HCT116 (cell line): ENCODE measurements at regions of chr2 and their contacts with region 1.

Region 1: GRCh38 chr2:84925724-84926376 is 20.4 kb downstream of the TMSB10 start:
- DNase-seq: peak; percentile 98
- ATAC-seq: peak; percentile 86
- H3K4me3 ChIP-seq: peak overlapping the region; percentile 54 to 74
- H3K27ac ChIP-seq: peak overlapping the region; percentile 73
- H3K4me1 ChIP-seq: peaks cover 11 to 43% of the 10 kb centered on the region in 2 experiments
- H3K27me3 ChIP-seq: no peaks in the 10 kb centered on the region
- CTCF ChIP-seq: peak in 2 of 3 experiments; percentile 98 to 100; a peak in 4 of 6 replicates
- POLR2A ChIP-seq: peak; percentile 23
- RAD21 ChIP-seq: no peak

Region 2: DNA sequence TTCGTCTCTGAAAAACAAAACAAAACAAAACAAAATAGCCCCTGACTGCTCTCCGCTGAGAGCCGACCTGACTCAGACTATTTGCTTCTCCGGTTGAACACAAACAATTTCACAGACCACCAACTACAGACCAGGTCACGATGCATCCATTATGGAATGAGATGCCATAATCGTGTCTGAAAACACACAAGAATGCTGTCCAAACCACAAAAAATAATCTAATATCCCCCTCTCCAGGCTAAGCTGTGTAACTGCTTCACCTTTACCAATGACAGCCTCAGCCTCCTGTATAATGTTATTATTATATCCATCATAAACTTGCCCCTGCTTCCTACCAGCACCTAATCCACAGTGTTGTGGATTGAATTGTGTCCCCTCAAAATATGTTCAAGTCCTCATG is 294.8 kb before region 1 on chr2:
- CTCF ChIA-PET with region 1: no interaction called
- POLR2A ChIA-PET with region 1: no interaction called
- RAD21 ChIA-PET with region 1: interaction called in 1 of 2 experiments, 3 read pairs
- intact Hi-C with region 1: loop called (anchors 5 kb)
- DNase-seq: peak; percentile 53
- ATAC-seq: peak; percentile 95
- H3K4me3 ChIP-seq: no peak overlapping the region
- H3K27ac ChIP-seq: no peak overlapping the region
- H3K4me1 ChIP-seq: no peaks in the 10 kb centered on the region
- H3K27me3 ChIP-seq: no peaks in the 10 kb centered on the region
- CTCF ChIP-seq: peak; percentile 58 to 76 (median 73)
- POLR2A ChIP-seq: no peak
- RAD21 ChIP-seq: peak; percentile 89

Region 3: GRCh38 chr2:84649487-84650142 is 276.2 kb before region 1 on chr2:
- CTCF ChIA-PET with region 1: no interaction called
- POLR2A ChIA-PET with region 1: no interaction called
- RAD21 ChIA-PET with region 1: no interaction called
- intact Hi-C with region 1: no loop called
- DNase-seq: no peak
- ATAC-seq: no peak
- H3K4me3 ChIP-seq: no peak overlapping the region
- H3K27ac ChIP-seq: no peak overlapping the region
- H3K4me1 ChIP-seq: no peaks in the 10 kb centered on the region
- H3K27me3 ChIP-seq: no peaks in the 10 kb centered on the region
- CTCF ChIP-seq: no peak
- POLR2A ChIP-seq: no peak
- RAD21 ChIP-seq: no peak

Region 4: GRCh38 chr2:84905181-84906107 is 20.4 kb before region 1 on chr2 and contains the start of gene TMSB10:
- CTCF ChIA-PET with region 1: interaction called, 21 read pairs
- POLR2A ChIA-PET with region 1: interaction called, 163 read pairs
- RAD21 ChIA-PET with region 1: interaction called, 3 to 4 read pairs
- intact Hi-C with region 1: no loop called
- DNase-seq: no peak
- ATAC-seq: peak; percentile 59
- H3K4me3 ChIP-seq: peak within 1 kb of the TSS; percentile 94
- H3K27ac ChIP-seq: peak within 1 kb of the TSS; percentile 96
- H3K4me1 ChIP-seq: peaks cover 16 to 33% of the 10 kb centered on the region in 2 experiments
- H3K27me3 ChIP-seq: no peaks in the 10 kb centered on the region
- CTCF ChIP-seq: no peak
- POLR2A ChIP-seq: peak; percentile 97
- RAD21 ChIP-seq: no peak
- total RNA-seq, gene TMSB10: 2,677 TPM

Region 5: GRCh38 chr2:84946204-84947009 is 20.6 kb after region 1 on chr2:
- CTCF ChIA-PET with region 1: interaction called, 39 read pairs
- POLR2A ChIA-PET with region 1: interaction called, 30 read pairs
- RAD21 ChIA-PET with region 1: interaction called, 3 to 4 read pairs
- intact Hi-C with region 1: no loop called
- DNase-seq: peak; percentile 96
- ATAC-seq: peak; percentile 94
- H3K4me3 ChIP-seq: peak overlapping the region; percentile 35 to 54
- H3K27ac ChIP-seq: peak overlapping the region; percentile 99
- H3K4me1 ChIP-seq: peaks cover 30 to 62% of the 10 kb centered on the region in 2 experiments
- H3K27me3 ChIP-seq: no peaks in the 10 kb centered on the region
- CTCF ChIP-seq: no peak
- POLR2A ChIP-seq: peak; percentile 26
- RAD21 ChIP-seq: no peak

Region 6: DNA sequence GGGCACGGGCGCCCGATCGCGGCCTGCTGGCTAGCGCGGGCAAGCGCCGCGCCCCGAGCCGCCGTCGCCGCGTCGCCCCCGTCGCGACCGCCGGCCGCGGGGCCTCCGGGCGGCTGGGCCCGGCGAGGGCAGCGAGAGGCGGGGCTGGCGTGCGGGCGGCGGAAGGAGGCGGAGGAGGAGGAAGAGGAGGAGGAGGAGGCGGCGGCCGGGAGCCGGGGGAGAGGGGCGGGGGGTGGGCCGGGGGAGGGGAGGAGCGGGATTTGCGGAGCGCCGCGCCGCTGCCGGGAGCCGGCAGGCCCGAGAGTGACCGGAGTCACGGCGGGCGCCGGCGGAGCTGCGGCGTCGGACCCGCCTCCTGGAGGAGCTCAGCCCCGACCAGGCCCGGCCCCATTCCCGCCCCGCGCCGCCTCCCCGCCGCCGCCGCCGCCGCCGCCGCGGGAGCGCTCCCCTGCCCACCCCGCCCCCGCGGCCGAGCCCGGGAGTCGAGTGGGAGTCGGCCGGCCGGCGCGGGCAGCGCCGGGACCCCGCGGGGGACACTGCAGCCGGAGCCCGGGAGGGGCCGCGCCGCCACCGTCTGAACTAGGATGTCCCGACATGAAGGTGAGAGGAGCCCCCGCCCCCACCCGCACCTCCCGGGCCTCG is 45.1 kb after region 1 on chr2 and contains the start of gene KCMF1:
- CTCF ChIA-PET with region 1: interaction called, 7 read pairs
- POLR2A ChIA-PET with region 1: interaction called, 10 read pairs
- RAD21 ChIA-PET with region 1: no interaction called
- intact Hi-C with region 1: loop called (anchors 1 kb)
- DNase-seq: no peak
- ATAC-seq: peak; percentile 80
- H3K4me3 ChIP-seq: peak within 1 kb of the TSS; percentile 75 to 90
- H3K27ac ChIP-seq: peak within 1 kb of the TSS; percentile 98
- H3K4me1 ChIP-seq: peaks cover 22 to 60% of the 10 kb centered on the region in 2 experiments
- H3K27me3 ChIP-seq: no peaks in the 10 kb centered on the region
- CTCF ChIP-seq: no peak
- POLR2A ChIP-seq: no peak
- RAD21 ChIP-seq: no peak
- total RNA-seq, gene KCMF1: 119 TPM

Region 7: DNA sequence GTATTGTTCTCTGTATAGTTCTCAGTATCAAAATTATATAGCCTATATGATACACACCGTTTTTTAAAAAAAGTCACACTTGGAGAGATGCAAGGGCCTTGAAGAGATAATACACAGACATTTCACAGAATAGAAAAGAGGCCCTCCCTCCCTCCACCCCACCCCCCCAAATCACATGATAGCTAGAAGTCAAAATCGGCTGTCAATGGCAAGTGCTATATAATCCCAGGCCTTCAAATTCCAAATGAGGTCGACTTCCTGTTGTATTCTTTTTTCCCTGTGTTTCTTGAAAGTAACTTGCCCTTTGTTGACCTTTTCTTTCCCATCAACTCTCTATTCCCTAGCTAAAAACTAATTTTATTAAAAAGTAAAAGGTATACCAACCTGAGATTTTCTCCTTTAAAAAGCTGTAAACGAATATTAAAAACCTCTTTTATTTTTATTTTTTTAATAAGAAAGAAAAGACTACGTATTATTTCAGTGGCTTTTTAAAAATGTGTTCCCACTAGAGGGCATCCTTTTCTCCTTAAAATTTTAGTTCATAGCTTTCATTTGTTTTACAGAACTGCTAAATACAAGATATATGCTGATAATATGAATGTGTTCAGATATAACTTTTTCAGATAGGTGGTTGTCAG is 91.7 kb after region 1 on chr2:
- CTCF ChIA-PET with region 1: interaction called, 14 read pairs
- POLR2A ChIA-PET with region 1: interaction called, 3 read pairs
- RAD21 ChIA-PET with region 1: interaction called in 1 of 2 experiments, 4 read pairs
- intact Hi-C with region 1: loop called (anchors 1 kb)
- DNase-seq: no peak
- ATAC-seq: no peak; the same call in 1 of the 2 replicates
- H3K4me3 ChIP-seq: no peak overlapping the region
- H3K27ac ChIP-seq: peak overlapping the region; percentile 11; the same call in 1 of the 2 replicates
- H3K4me1 ChIP-seq: peaks cover 23 to 38% of the 10 kb centered on the region in 2 experiments
- H3K27me3 ChIP-seq: no peaks in the 10 kb centered on the region
- CTCF ChIP-seq: peak; percentile 29 to 48 (median 34); a peak in 4 of 6 replicates
- POLR2A ChIP-seq: no peak
- RAD21 ChIP-seq: peak; percentile 23; the same call in 1 of the 2 replicates

Region 8: GRCh38 chr2:85302121-85302520 is 376.3 kb after region 1 on chr2:
- CTCF ChIA-PET with region 1: interaction called, 16 read pairs
- POLR2A ChIA-PET with region 1: interaction called, 3 read pairs
- RAD21 ChIA-PET with region 1: no interaction called
- intact Hi-C with region 1: loop called (anchors 1 kb)
- DNase-seq: no peak
- ATAC-seq: no peak
- H3K4me3 ChIP-seq: no peak overlapping the region
- H3K27ac ChIP-seq: no peak overlapping the region
- H3K4me1 ChIP-seq: peaks cover 0 to 9% of the 10 kb centered on the region in 2 experiments; a peak in 2 of 4 replicates
- H3K27me3 ChIP-seq: no peaks in the 10 kb centered on the region
- CTCF ChIP-seq: no peak
- POLR2A ChIP-seq: no peak
- RAD21 ChIP-seq: no peak